ENCODE measurements at regions of chr1 and their contacts with region 1.

Region 1: GRCh38 chr1:116514708-116515525 is 55.9 kb downstream of the CD58 start:
- DNase-seq: peak in 8 of 9 donors; percentile 11 to 71 (median 30)
- ATAC-seq: peak; percentile 82
- H3K4me3 ChIP-seq: peak overlapping the region; percentile 12
- H3K4me3 Mint-ChIP-seq: peak overlapping the region; percentile 48 to 82 (median 72)
- H3K27ac ChIP-seq: peak overlapping the region; percentile 25
- H3K27ac Mint-ChIP-seq: peak overlapping the region; percentile 66 to 93 (median 88)
- H3K4me1 ChIP-seq: peaks cover 30 to 49% of the 10 kb centered on the region in 2 donors
- H3K4me1 Mint-ChIP-seq: peaks cover 37 to 72% (median 53%) of the 10 kb centered on the region in 7 donors
- H3K27me3 ChIP-seq: no peaks in the 10 kb centered on the region
- H3K27me3 Mint-ChIP-seq: no peaks in the 10 kb centered on the region

Region 2: GRCh38 chr1:116418091-116418830 is 96.7 kb before region 1 on chr1:
- CTCF ChIA-PET with region 1: no interaction called
- POLR2A ChIA-PET with region 1: no interaction called
- intact Hi-C with region 1: no loop called
- DNase-seq: peak; percentile 76 to 90 (median 88)
- ATAC-seq: peak; percentile 97
- H3K4me3 ChIP-seq: peak overlapping the region; percentile 97
- H3K4me3 Mint-ChIP-seq: peak overlapping the region; percentile 85 to 95 (median 90)
- H3K27ac ChIP-seq: peak overlapping the region; percentile 87
- H3K27ac Mint-ChIP-seq: peak overlapping the region; percentile 83 to 98 (median 95)
- H3K4me1 ChIP-seq: peaks cover 12 to 18% of the 10 kb centered on the region in 2 donors
- H3K4me1 Mint-ChIP-seq: peaks cover 22 to 52% (median 47%) of the 10 kb centered on the region in 7 donors
- H3K27me3 ChIP-seq: no peaks in the 10 kb centered on the region
- H3K27me3 Mint-ChIP-seq: peaks cover 0 to 15% (median 0%) of the 10 kb centered on the region in 5 donors

Region 3: DNA sequence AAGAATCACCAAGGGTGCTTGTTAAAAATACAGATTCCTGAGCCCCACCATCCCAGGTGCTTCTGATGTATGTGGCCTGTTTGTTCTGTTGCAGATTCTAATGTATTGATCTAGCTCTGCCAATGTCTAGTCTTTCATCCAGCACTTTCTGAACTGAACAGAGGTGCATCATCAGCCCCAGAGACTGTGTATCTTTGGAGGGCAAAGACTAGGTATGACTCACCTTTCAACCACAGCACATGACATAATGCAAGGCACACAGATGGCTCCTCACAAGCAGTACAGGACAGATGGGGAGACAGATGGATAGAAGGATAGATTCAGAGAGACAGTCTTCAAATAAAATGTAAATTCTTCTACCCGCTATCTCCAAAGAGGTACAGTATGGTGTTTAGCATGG is 23.6 kb after region 1 on chr1:
- CTCF ChIA-PET with region 1: no interaction called
- POLR2A ChIA-PET with region 1: no interaction called
- intact Hi-C with region 1: loop called in 1 of 2 experiments (anchors 2 kb)
- DNase-seq: peak in 1 of 9 donors; percentile 46
- ATAC-seq: peak; percentile 22
- H3K4me3 ChIP-seq: no peak overlapping the region
- H3K4me3 Mint-ChIP-seq: peak overlapping the region in 1 of 10 donors; percentile 3
- H3K27ac ChIP-seq: no peak overlapping the region
- H3K27ac Mint-ChIP-seq: peak overlapping the region in 1 of 9 donors; percentile 56
- H3K4me1 ChIP-seq: peaks cover 0 to 12% of the 10 kb centered on the region in 2 donors
- H3K4me1 Mint-ChIP-seq: peaks cover 3 to 55% (median 7%) of the 10 kb centered on the region in 7 donors
- H3K27me3 ChIP-seq: no peaks in the 10 kb centered on the region
- H3K27me3 Mint-ChIP-seq: no peaks in the 10 kb centered on the region

Region 4: GRCh38 chr1:116556289-116557006 is 41.5 kb after region 1 on chr1:
- CTCF ChIA-PET with region 1: no interaction called
- POLR2A ChIA-PET with region 1: interaction called, 3 read pairs
- intact Hi-C with region 1: loop called in 1 of 2 experiments (anchors 5 kb)
- DNase-seq: peak in 1 of 9 donors; percentile 72
- ATAC-seq: peak; percentile 91
- H3K4me3 ChIP-seq: no peak overlapping the region
- H3K4me3 Mint-ChIP-seq: peak overlapping the region in 1 of 10 donors; percentile 33
- H3K27ac ChIP-seq: no peak overlapping the region
- H3K27ac Mint-ChIP-seq: peak overlapping the region in 1 of 9 donors; percentile 70
- H3K4me1 ChIP-seq: peaks cover 0 to 27% of the 10 kb centered on the region in 2 donors
- H3K4me1 Mint-ChIP-seq: peaks cover 0 to 75% (median 18%) of the 10 kb centered on the region in 7 donors
- H3K27me3 ChIP-seq: no peaks in the 10 kb centered on the region
- H3K27me3 Mint-ChIP-seq: no peaks in the 10 kb centered on the region

Measured in naive thymus-derived CD4-positive, alpha-beta T cell (primary cell).